HEK293 (cell line): ENCODE measurements at regions of chr16 and their contacts with region 1.

Region 1: GRCh38 chr16:19086322-19087199 is 19.1 kb downstream of the COQ7 start:
- H3K4me3 ChIP-seq: peak overlapping the region; percentile 29
- H3K27ac ChIP-seq: no peak overlapping the region
- H3K4me1 ChIP-seq: peaks cover 4% of the 10 kb centered on the region
- CTCF ChIP-seq: peak; percentile 97

Region 2: GRCh38 chr16:19014461-19014860 is 72.1 kb before region 1 on chr16:
- CTCF ChIA-PET with region 1: no interaction called
- POLR2A ChIA-PET with region 1: no interaction called
- H3K4me3 ChIP-seq: no peak overlapping the region
- H3K27ac ChIP-seq: no peak overlapping the region
- H3K4me1 ChIP-seq: no peaks in the 10 kb centered on the region
- CTCF ChIP-seq: no peak

Region 3: DNA sequence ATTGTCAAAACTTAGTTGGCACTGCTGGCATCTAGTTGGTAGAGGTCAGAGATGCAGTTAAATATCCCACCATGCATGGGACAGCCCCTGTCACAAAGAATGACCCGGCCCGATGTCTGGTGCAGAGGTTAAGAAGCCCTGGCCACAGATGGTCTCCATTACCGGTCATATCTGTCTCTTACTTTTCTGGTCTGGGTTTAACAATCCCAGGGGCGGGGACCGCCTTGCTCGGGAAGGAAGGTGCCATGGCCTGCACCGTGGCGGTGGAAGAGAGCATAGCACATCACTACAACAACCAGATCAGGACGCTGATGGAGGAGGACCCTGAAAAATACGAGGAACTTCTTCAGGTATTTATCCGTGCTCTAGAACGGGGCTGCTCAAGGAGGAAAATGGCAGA is 11.1 kb before region 1 on chr16:
- CTCF ChIA-PET with region 1: interaction called, 18 read pairs
- POLR2A ChIA-PET with region 1: interaction called, 3 read pairs
- H3K4me3 ChIP-seq: no peak overlapping the region
- H3K27ac ChIP-seq: no peak overlapping the region
- H3K4me1 ChIP-seq: no peaks in the 10 kb centered on the region
- CTCF ChIP-seq: no peak

Region 4: GRCh38 chr16:19118938-19119431 is 32.4 kb after region 1 on chr16:
- CTCF ChIA-PET with region 1: interaction called, 11 read pairs
- POLR2A ChIA-PET with region 1: no interaction called
- H3K4me3 ChIP-seq: peak overlapping the region; percentile 7; the same call in 1 of the 2 replicates
- H3K27ac ChIP-seq: 0 out of 2 replicates have a peak overlapping the region, but pooled peaks have one; percentile 25
- H3K4me1 ChIP-seq: peaks cover 9% of the 10 kb centered on the region; the same call in 1 of the 2 replicates
- CTCF ChIP-seq: no peak

Region 5: GRCh38 chr16:19212059-19212458 is 125.5 kb after region 1 on chr16:
- CTCF ChIA-PET with region 1: interaction called, 10 read pairs
- POLR2A ChIA-PET with region 1: no interaction called
- H3K4me3 ChIP-seq: no peak overlapping the region
- H3K27ac ChIP-seq: no peak overlapping the region
- H3K4me1 ChIP-seq: no peaks in the 10 kb centered on the region
- CTCF ChIP-seq: no peak

Region 6: DNA sequence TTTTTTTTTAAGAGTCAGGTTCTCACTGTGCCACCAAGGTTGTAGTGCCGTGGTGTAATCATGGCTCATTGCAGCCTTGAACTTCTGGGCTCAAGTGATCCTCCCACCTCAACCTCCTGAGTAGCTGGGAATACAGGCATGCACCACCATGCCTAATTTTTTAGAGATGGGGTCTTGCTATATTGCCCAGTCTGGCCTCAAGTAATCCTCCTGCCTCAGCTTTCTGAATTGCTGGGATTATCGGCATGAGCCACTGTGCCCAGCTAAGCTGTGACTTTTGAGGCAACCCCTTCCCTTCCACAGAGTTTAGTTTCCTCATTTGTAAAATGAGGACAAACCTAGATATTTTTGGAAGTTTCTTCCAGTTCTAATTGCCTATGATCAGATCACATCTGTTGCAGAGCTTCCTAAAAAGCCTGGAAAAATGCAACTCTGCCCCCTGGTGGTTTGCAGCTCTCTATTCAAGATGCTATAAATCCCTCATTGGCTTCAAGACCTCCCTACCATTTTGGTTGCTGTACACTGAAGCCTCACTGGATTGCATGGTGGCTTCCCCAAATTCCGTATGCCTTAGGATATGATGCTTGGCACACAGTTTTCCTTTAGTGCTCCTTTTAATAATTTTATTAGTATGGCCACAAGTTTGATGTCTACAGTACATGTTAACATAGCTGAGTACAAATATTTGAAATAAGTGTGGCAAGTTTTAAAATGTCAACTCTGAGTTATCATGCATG is 416.0 kb after region 1 on chr16:
- CTCF ChIA-PET with region 1: interaction called, 17 read pairs
- POLR2A ChIA-PET with region 1: interaction called, 3 read pairs
- H3K4me3 ChIP-seq: no peak overlapping the region
- H3K27ac ChIP-seq: no peak overlapping the region
- H3K4me1 ChIP-seq: no peaks in the 10 kb centered on the region
- CTCF ChIP-seq: peak; percentile 35; the same call in 1 of the 2 replicates